ENCODE measurements at regions of chr11 and their contacts with region 1.

Region 1: DNA sequence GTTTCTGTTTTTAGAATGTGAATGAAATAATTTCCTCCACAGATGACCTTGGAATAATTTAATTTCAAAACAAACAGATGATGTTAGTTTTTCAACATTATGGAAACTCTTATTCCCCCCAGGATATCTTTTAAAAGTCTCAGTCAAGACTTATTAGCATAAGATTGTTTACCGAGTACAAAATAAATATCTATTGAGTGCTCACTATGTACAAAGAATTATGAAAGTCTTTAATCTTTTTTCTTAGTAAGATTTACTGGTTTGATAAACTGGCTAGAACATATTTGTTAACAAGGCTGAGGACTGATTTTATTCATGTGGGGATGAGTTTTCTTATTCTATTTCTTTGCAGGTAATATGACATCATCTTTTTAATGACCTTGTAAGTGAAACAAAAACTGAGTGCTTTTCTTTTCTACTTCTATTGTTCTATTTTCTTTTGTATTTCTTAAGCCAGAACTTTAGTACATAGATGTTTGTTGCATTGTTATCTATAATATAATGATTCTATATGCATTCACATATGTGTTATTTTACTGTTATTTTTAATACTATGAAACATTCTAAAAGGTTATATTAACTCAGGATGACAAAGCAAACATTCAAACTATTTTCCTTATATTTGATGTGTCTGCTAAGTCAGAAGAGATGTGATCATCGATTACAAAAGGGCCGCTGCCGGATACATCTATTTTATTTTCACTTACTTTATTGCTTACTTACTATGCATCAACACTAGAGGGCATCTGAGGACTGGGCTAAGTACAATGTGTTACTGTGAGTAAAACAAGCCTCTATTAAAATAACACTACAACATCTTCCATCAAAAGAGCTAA is 111.0 kb upstream of the ARHGAP42 start:
- DNase-seq: peak; percentile 35
- CTCF ChIP-seq: peak; percentile 58

Region 2: GRCh38 chr11:100776212-100776896 is 200.3 kb after region 1 on chr11:
- in situ Hi-C with region 1: no loop called
- DNase-seq: no peak
- CTCF ChIP-seq: no peak

Region 3: GRCh38 chr11:100925935-100926334 is 349.8 kb after region 1 on chr11:
- in situ Hi-C with region 1: loop called (anchors 10 kb)
- DNase-seq: no peak
- CTCF ChIP-seq: no peak

Measured in GM13976 (cell line).